Head of caudate nucleus (tissue), 42 donors: ENCODE measurements at regions of chr19 and their contacts with region 1.

Region 1: DNA sequence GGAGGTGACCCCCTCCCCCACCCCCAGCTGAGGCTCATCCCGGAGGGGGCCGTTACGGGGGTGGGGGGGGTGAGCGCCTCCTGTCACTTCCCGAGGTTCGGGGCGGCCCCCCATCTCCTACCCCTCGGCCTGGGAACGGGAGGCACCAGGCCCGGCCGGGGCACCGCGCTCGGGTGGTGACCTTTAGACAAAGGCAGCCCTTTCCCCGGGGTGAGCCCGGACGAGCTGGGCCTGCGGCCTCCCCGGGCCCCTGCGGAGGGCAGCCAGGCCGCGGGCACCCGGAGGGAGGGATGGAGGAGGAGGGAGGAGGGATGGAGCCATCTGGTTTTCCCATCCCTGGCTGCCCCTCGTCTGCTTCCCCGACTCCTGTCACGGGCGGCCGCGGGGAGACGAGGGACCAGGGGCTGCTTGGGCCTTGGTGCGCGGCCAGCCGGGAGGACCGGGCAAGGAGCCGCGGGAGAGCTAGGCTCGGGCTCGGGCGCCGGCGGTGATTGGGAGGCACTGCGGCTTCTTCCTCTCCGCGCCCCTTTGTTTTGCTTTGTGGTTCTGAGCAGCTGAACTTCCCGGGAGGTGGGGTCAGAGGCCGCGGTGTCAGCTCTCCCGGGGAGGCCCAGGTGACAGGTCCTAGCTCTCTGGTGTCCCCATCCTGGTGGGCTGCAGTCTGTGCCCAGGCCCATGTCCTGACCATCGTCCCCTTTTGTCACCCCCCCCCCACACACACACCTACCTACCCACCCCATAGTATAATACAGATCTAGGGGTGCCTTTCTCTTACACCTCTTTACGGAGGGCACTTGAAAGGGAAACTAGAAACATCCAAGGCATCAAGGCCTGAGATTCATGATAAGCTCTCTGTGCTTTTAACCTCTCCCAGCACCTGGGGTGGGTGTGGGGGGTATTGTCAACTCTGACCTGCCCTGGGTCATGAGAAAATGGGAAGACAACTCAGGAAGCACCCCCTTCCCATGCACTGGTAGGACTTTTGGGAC is 1.3 kb downstream of the BICRA start:
- DNase-seq: peak in 38 of 42 donors; percentile 22 to 77 (median 46)

Region 2: DNA sequence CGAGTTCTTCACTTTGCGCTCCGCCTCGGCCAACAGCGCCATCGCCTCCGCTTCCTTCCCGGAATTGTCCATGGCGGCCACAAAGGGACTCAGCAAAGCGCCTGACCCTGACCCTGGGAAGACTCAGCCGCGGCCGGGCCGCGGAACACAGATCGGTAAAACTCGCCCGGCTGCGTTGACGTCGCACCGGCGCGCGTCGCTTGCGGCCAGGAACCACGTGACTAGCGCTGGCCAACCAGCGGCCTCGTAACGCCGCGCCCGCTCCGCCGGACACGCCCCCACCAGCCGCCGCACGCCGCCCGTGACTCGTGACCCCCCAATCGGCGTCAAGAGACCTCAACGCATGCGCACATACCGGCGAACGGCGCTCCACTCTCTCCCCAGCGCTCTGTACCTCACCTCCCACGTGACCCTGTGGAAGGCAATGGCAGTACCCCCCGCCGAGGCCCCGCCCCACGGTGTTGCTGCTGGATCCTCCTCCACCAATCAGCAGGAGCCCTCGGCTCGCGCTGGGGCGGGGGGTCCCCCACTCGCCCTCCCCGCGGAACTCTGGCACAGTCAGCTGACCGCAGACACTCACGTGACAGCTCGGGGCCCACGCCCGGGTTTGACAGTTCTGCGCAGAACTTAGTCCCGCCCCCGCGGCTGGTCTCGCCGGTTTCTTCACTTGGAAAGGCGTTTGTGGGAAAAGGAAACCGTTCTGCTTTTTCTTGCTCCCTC is 95.2 kb before region 1 on chr19 and contains the start of gene NAPA:
- intact Hi-C with region 1: loop called (anchors 5 kb)
- DNase-seq: peak; percentile 100

Region 3: DNA sequence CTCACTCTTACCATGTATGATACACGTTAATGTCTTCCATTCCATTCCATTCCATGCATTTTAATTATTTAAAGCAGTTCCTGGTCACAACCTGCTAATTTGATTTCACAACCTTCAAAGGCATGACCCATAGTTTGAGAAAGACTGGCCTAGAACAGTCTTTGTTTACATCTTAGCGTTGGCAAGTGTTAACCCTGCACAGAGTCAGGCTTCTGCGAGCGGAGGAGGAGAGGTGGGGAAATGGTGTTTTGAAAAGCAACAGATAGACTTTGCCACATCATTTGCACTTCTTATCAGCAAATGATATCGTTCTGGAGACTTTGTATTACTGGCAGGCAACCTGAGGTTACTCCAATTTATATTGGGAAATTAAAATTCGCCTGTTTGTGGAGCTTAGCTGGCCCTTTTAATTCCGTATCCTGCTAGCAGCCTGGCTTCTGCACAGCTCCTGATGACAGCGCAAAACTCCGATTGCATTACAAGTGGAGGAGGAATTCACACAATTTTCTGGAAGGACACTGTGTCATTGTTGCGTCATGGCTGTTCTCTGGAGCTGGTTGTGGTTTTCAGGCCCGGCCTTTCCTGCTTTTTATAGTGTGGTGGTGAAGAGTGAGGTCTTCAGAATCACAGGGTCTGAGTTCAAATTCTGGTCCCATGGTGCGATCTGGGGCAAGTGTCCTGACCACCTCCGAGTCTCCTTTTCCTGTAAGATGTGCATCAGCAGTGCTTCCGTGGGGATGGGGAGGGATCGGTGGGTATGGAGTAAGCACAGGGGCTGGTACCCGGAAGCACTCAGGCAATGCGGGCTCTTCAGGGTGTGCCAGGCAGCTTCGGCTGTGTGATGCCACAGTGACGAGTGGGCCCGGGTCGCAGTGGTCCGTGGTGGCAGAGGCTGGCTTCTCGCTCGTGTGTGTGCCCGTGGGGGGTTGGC is 53.9 kb after region 1 on chr19:
- intact Hi-C with region 1: loop called (anchors 10 kb)
- DNase-seq: peak in 31 of 42 donors; percentile 12 to 82 (median 44)